ENCODE measurements at regions of chr9 and their contacts with region 1.

Region 1: DNA sequence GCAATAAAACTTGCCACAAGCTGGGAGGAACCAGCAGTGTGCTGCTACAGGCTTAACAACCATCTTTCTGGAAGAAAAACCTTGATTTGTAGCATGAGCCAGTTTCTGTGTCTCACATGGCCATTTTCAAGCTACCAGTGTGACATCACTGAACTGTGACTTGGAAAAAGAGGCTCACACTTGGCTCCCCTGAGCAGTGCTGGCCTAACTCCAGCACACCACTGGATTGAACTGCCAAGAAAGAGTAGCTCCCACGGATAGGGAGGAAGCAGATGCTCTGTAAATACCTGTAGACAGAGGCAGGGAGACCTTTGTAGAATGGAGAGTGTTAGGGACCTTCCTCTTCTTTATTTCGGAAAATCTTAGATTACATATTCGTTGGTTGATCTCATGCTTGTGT is 197.9 kb downstream of the SH3GL2 start:
- DNase-seq: peak in 4 of 5 donors; percentile 43 to 72 (median 54)
- ATAC-seq: peak; percentile 78 to 98 (median 94)
- H3K4me3 ChIP-seq: no peak overlapping the region
- H3K27ac ChIP-seq: peak overlapping the region in 1 of 12 donors; percentile 56
- H3K4me1 ChIP-seq: peaks cover 0 to 13% (median 0%) of the 10 kb centered on the region in 12 donors
- H3K27me3 ChIP-seq: no peaks in the 10 kb centered on the region
- CTCF ChIP-seq: no peak
- POLR2A ChIP-seq: no peak

Region 2: DNA sequence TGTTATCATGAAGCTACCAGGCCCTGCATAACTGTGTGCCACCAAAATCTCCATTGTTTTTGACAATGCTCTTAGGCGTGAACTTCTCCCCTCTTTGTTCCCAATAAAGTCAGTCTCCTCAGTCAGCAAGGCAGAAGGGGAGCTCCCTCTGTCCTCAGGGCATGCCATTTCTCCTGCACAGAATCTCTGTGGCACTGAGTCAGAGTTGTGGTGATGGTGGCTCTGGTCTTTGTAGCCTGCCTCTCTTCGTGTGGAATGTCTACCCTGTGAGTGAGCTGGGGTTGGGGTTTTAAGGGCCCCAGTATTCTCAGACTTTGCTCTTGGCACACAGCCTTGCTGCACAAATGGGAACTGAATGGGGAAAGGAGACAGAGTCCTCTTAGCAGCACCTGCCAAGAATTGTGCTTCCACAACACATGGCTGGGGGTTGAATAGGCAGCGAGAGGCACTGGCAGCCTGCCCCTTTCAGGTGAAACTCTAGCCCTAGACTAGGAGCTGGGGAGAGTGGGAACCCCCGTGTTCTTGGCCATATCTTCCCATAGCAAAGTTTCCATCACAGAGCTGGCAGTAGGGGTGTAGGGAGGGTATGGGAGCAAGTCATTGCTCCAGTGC is 51.2 kb before region 1 on chr9:
- intact Hi-C with region 1: loop called in 1 of 10 experiments (anchors 10 kb)
- DNase-seq: no peak
- ATAC-seq: no peak
- H3K4me3 ChIP-seq: no peak overlapping the region
- H3K27ac ChIP-seq: no peak overlapping the region
- H3K4me1 ChIP-seq: no peaks in the 10 kb centered on the region
- H3K27me3 ChIP-seq: no peaks in the 10 kb centered on the region
- CTCF ChIP-seq: no peak
- POLR2A ChIP-seq: no peak